ENCODE measurements at regions of chr2 and their contacts with region 1.

Region 1: GRCh38 chr2:118882709-118883210 is 35.3 kb upstream of the EN1 start:
- DNase-seq: peak; percentile 34 to 66
- ATAC-seq: peak; percentile 82 to 90
- H3K4me3 ChIP-seq: peak overlapping the region; percentile 36; the same call in 2 of the 3 replicates
- H3K27ac ChIP-seq: peak overlapping the region in 1 of 2 experiments; percentile 56; a peak in 2 of 6 replicates
- H3K4me1 ChIP-seq: no peaks in the 10 kb centered on the region
- CTCF ChIP-seq: peak; percentile 67
- EP300 ChIP-seq: no peak
- POLR2A ChIP-seq: no peak
- RAD21 ChIP-seq: peak; percentile 75 to 86

Region 2: DNA sequence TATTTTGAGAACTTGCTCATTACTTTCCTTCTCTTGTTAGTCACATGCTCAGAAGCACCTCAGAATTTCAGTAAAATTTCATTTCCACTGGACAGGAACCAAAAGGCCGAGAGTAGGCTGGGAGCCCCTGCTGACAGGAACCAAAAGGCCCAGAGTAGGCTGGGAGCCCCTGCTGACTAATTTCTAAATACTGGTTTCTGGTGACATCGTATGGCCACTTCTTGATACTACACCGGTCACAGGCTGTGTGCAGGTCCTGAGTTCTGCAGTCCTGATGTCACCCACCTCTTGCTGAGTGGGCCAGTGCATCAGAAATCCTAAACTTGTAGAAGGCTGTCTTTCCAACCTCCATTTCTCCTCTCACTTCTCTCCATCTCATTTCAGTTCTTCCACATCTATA is 17.7 kb before region 1 on chr2:
- CTCF ChIA-PET with region 1: interaction called, 56 read pairs
- POLR2A ChIA-PET with region 1: no interaction called
- DNase-seq: peak; percentile 29 to 55
- ATAC-seq: peak; percentile 94 to 99
- H3K4me3 ChIP-seq: no peak overlapping the region
- H3K27ac ChIP-seq: no peak overlapping the region
- H3K4me1 ChIP-seq: peaks cover 5% of the 10 kb centered on the region; the same call in 1 of the 3 replicates
- CTCF ChIP-seq: peak; percentile 77
- EP300 ChIP-seq: no peak
- POLR2A ChIP-seq: no peak
- RAD21 ChIP-seq: peak; percentile 76 to 90

Region 3: DNA sequence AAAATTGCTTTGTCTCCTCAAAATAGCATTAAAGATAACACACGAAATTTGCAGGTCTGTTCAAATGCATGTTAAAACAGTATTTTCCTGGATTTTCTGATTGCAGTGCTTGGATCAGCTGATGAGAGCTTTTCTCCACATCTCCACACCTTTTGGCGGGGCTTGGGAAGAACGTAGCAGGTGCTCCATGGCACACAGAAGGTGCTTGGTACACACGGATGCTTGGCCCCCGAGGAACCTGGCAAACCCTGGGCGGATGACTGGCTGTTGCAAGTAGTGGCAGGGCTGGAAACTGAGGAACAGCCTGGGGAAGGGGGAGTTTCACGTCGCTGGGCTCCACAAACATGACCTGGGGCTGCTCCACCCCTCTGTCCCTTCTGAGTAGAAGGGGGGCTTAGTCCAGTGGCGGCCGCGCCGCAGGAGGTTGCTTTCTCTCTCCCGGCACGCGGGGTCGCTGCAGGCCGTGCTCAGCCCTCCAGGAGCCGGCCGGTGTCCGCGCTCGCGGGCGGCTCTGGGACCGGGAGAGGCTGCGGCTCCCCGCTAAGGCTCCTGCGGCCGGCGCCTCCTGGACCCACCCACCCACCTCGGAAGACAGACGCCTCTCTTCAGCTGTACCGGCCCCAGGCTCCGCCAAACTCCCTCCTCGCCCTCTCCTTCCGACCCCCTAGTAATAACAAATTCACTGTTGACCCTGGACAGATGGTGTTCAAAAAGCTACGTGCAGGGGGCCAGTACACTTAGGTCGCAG is 128.6 kb after region 1 on chr2:
- CTCF ChIA-PET with region 1: interaction called, 13 read pairs
- POLR2A ChIA-PET with region 1: no interaction called
- DNase-seq: peak; percentile 49 to 51
- ATAC-seq: peak; percentile 95 to 98
- H3K4me3 ChIP-seq: 0 out of 3 replicates have a peak overlapping the region, but pooled peaks have one; percentile 27
- H3K27ac ChIP-seq: 0 out of 6 replicates have a peak overlapping the region, but pooled peaks of 1 of the 2 experiments have one; percentile 48
- H3K4me1 ChIP-seq: no peaks in the 10 kb centered on the region
- CTCF ChIP-seq: peak; percentile 68
- EP300 ChIP-seq: no peak
- POLR2A ChIP-seq: no peak
- RAD21 ChIP-seq: peak; percentile 72 to 87

Region 4: GRCh38 chr2:119264781-119265692 is 382.3 kb after region 1 on chr2:
- CTCF ChIA-PET with region 1: interaction called, 35 read pairs
- POLR2A ChIA-PET with region 1: no interaction called
- DNase-seq: peak; percentile 49 to 60
- ATAC-seq: peak; percentile 95 to 99
- H3K4me3 ChIP-seq: no peak overlapping the region
- H3K27ac ChIP-seq: no peak overlapping the region
- H3K4me1 ChIP-seq: no peaks in the 10 kb centered on the region
- CTCF ChIP-seq: peak; percentile 84
- EP300 ChIP-seq: no peak
- POLR2A ChIP-seq: no peak
- RAD21 ChIP-seq: peak; percentile 85 to 86

Region 5: GRCh38 chr2:119290859-119291587 is 408.3 kb after region 1 on chr2:
- CTCF ChIA-PET with region 1: interaction called, 100 read pairs
- POLR2A ChIA-PET with region 1: no interaction called
- DNase-seq: peak; percentile 73 to 76
- ATAC-seq: peak; percentile 97 to 99
- H3K4me3 ChIP-seq: no peak overlapping the region
- H3K27ac ChIP-seq: no peak overlapping the region
- H3K4me1 ChIP-seq: no peaks in the 10 kb centered on the region
- CTCF ChIP-seq: peak; percentile 83
- EP300 ChIP-seq: no peak
- POLR2A ChIP-seq: no peak
- RAD21 ChIP-seq: peak; percentile 85 to 92

Measured in A549 (cell line).